ENCODE measurements at regions of chr10 and their contacts with region 1.

Region 1: GRCh38 chr10:71766702-71767419 is 6.5 kb downstream of the VSIR start:
- DNase-seq: peak in 2 of 5 donors; percentile 48 to 70
- H3K4me3 ChIP-seq: peak overlapping the region; percentile 18
- H3K4me3 Mint-ChIP-seq: peak overlapping the region; percentile 67 to 91 (median 78)
- H3K27ac ChIP-seq: peak overlapping the region; percentile 45
- H3K27ac Mint-ChIP-seq: peak overlapping the region; percentile 92 to 100 (median 97)
- H3K4me1 ChIP-seq: peaks cover 97% of the 10 kb centered on the region
- H3K4me1 Mint-ChIP-seq: peaks cover 91 to 100% (median 98%) of the 10 kb centered on the region in 3 donors
- H3K27me3 ChIP-seq: no peaks in the 10 kb centered on the region
- H3K27me3 Mint-ChIP-seq: no peaks in the 10 kb centered on the region

Region 2: DNA sequence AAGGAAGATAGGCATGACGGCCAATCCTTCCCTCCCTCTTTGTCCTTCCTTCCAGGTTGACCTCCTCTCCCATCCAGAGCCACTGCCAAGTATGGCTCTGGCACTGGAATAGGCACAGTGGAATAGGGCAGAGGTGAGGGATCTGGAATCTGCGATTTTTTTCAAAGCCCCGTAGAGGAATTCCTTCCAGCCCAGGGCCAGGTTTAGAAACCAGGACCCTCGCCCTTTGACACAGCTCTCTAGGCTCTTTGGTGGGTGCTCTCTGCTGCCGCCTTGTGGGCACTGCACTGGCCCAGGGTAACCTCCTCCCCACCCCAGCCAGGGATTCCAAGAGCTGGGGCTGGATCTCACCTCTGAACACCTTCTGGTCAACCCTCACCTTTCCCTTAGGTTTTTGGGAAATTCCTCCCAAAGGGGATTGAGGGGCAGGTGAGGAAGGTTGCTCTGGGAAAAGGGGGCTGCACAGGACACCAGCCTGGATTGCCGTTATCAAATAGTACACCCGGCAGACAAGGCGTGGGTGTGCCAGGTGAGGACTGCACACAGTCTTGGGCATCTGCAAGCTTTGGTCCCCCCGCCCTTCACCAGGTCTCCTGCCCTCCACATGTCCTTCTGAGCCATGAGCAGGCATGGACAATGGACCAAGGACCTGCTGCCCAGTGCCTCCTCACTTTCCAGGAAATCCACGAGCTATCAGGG is 70.1 kb before region 1 on chr10:
- CTCF ChIA-PET with region 1: interaction called, 90 read pairs
- POLR2A ChIA-PET with region 1: interaction called, 3 read pairs
- DNase-seq: peak; percentile 35 to 75 (median 55)
- H3K4me3 ChIP-seq: no peak overlapping the region
- H3K4me3 Mint-ChIP-seq: peak overlapping the region in 5 of 7 donors; percentile 11 to 68 (median 28)
- H3K27ac ChIP-seq: no peak overlapping the region
- H3K27ac Mint-ChIP-seq: peak overlapping the region in 5 of 8 donors; percentile 51 to 88 (median 68)
- H3K4me1 ChIP-seq: peaks cover 54% of the 10 kb centered on the region
- H3K4me1 Mint-ChIP-seq: peaks cover 44 to 62% (median 52%) of the 10 kb centered on the region in 3 donors
- H3K27me3 ChIP-seq: no peaks in the 10 kb centered on the region
- H3K27me3 Mint-ChIP-seq: no peaks in the 10 kb centered on the region

Region 3: GRCh38 chr10:71740069-71740468 is 26.8 kb before region 1 on chr10:
- CTCF ChIA-PET with region 1: interaction called, 27 read pairs
- POLR2A ChIA-PET with region 1: interaction called, 25 read pairs
- DNase-seq: no peak
- H3K4me3 ChIP-seq: no peak overlapping the region
- H3K4me3 Mint-ChIP-seq: peak overlapping the region in 5 of 7 donors; percentile 15 to 70 (median 51)
- H3K27ac ChIP-seq: no peak overlapping the region
- H3K27ac Mint-ChIP-seq: peak overlapping the region; percentile 76 to 99 (median 96)
- H3K4me1 ChIP-seq: peaks cover 100% of the 10 kb centered on the region
- H3K4me1 Mint-ChIP-seq: peaks cover 93 to 100% (median 99%) of the 10 kb centered on the region in 3 donors
- H3K27me3 ChIP-seq: no peaks in the 10 kb centered on the region
- H3K27me3 Mint-ChIP-seq: peaks cover 0 to 2% of the 10 kb centered on the region in 2 donors

Region 4: GRCh38 chr10:71748671-71749191 is 18.1 kb before region 1 on chr10:
- CTCF ChIA-PET with region 1: interaction called, 89 read pairs
- POLR2A ChIA-PET with region 1: interaction called, 25 read pairs
- DNase-seq: peak; percentile 62 to 89 (median 82)
- H3K4me3 ChIP-seq: peak overlapping the region; percentile 38
- H3K4me3 Mint-ChIP-seq: peak overlapping the region; percentile 64 to 87 (median 75)
- H3K27ac ChIP-seq: peak overlapping the region; percentile 60
- H3K27ac Mint-ChIP-seq: peak overlapping the region; percentile 93 to 99 (median 96)
- H3K4me1 ChIP-seq: peaks cover 99% of the 10 kb centered on the region
- H3K4me1 Mint-ChIP-seq: peaks cover 94 to 98% (median 96%) of the 10 kb centered on the region in 3 donors
- H3K27me3 ChIP-seq: no peaks in the 10 kb centered on the region
- H3K27me3 Mint-ChIP-seq: no peaks in the 10 kb centered on the region

Region 5: GRCh38 chr10:71756311-71757191 is 10.3 kb before region 1 on chr10:
- CTCF ChIA-PET with region 1: interaction called, 89 read pairs
- POLR2A ChIA-PET with region 1: interaction called, 24 read pairs
- DNase-seq: peak in 2 of 5 donors; percentile 68 to 83
- H3K4me3 ChIP-seq: peak overlapping the region; percentile 23
- H3K4me3 Mint-ChIP-seq: peak overlapping the region; percentile 56 to 76 (median 68)
- H3K27ac ChIP-seq: no peak overlapping the region
- H3K27ac Mint-ChIP-seq: peak overlapping the region; percentile 82 to 98 (median 93)
- H3K4me1 ChIP-seq: peaks cover 93% of the 10 kb centered on the region
- H3K4me1 Mint-ChIP-seq: peaks cover 74 to 89% (median 82%) of the 10 kb centered on the region in 3 donors
- H3K27me3 ChIP-seq: no peaks in the 10 kb centered on the region
- H3K27me3 Mint-ChIP-seq: no peaks in the 10 kb centered on the region